Aorta (tissue), 5 donors: ENCODE measurements at regions of chr7 and their contacts with region 1.

Region 1: DNA sequence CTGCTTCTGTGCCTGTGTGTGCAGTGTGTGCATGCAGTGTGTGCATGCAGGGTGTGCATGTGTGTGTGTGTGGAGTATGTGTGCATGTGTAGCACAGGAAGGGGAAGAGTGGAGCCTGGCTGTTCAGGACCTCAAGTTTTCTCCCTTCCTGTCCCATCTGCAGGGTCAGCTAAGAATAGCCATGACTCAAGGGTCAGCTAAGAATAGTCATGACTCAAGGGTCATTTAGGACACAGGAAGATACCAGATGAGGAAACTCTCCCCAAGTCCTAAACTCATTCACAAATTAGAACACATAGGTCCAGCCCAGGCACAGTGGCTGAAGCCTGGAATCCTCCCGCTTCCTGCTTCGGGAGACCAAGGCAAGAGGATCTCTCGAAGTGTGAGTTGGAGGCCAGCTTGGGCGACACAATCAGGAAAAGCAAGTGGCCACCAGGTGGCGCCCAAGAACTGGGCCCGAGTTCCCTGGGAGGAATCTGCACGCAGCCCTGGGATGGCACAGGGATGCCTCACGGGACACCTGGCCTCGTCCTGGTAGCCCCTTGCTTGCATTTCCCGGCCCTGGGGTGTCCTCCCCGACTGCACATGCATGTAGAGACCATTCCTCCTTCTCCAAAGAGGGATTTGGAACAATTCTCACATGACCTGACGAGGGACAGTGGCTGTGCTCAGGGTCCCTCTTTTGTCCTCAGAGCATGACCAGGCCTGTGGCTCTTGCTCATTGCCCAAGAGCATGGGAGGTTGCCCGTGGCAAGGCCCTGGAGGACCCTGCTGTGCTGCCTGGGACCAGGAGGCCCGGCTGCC is 21.4 kb upstream of the VOPP1 start:
- DNase-seq: peak; percentile 78 to 90
- ATAC-seq: peak; percentile 49
- H3K4me3 ChIP-seq: no peak overlapping the region
- H3K27ac ChIP-seq: no peak overlapping the region
- H3K4me1 ChIP-seq: no peaks in the 10 kb centered on the region
- H3K27me3 ChIP-seq: no peaks in the 10 kb centered on the region

Region 2: GRCh38 chr7:55280031-55280454 is 313.7 kb before region 1 on chr7:
- intact Hi-C with region 1: loop called (anchors 10 kb)
- DNase-seq: peak in 1 of 2 donors; percentile 58
- ATAC-seq: peak; percentile 81
- H3K4me3 ChIP-seq: no peak overlapping the region
- H3K27ac ChIP-seq: no peak overlapping the region
- H3K4me1 ChIP-seq: no peaks in the 10 kb centered on the region
- H3K27me3 ChIP-seq: no peaks in the 10 kb centered on the region

Region 3: DNA sequence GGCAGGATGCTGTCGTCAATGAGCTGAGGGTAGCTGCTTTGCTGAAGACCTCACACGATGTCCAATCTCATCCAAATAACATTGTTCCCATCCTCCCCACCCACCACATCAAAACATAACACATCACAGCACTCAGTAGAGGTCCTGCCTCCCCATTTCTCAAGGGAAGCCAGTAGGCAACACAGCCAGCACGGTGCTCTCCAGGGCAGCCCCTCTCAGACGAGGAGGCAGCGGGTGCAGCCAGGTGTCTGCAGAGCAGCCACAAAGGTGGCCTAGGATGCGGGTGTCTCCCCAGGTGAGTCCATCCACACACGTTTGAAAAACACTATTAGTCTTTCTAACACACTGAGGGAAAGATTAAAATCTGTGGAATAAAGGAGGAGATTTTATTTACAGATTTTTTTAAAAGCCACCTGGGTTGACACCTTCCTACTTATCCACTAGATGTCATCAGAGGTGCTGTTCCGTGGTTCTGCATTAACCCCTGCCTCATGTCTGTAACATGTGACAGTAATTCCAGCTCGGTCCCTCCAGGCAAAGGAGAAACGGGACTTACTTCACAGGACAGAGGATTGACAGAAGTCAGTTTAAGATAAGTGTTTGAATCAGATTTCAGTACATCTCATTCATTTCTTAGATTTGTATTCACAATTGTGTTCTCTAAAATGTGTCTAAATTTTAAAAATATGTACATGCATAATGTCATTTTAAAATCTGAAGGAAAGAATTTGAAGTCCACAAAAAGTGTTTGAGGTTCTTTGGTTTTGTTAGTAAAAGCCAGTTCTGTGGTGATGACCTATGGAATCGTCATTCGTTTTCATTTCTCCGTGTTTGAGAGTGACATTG is 160.6 kb before region 1 on chr7:
- intact Hi-C with region 1: loop called in 1 of 2 experiments (anchors 5 kb)
- DNase-seq: no peak
- ATAC-seq: no peak
- H3K4me3 ChIP-seq: no peak overlapping the region
- H3K27ac ChIP-seq: no peak overlapping the region
- H3K4me1 ChIP-seq: no peaks in the 10 kb centered on the region
- H3K27me3 ChIP-seq: no peaks in the 10 kb centered on the region

Region 4: GRCh38 chr7:55439627-55440026 is 154.1 kb before region 1 on chr7:
- intact Hi-C with region 1: loop called (anchors 5 kb)
- DNase-seq: no peak
- ATAC-seq: no peak
- H3K4me3 ChIP-seq: no peak overlapping the region
- H3K27ac ChIP-seq: no peak overlapping the region
- H3K4me1 ChIP-seq: no peaks in the 10 kb centered on the region
- H3K27me3 ChIP-seq: no peaks in the 10 kb centered on the region

Region 5: GRCh38 chr7:55526770-55527169 is 66.9 kb before region 1 on chr7:
- intact Hi-C with region 1: loop called in 1 of 2 experiments (anchors 10 kb)
- DNase-seq: no peak
- ATAC-seq: no peak
- H3K4me3 ChIP-seq: no peak overlapping the region
- H3K27ac ChIP-seq: no peak overlapping the region
- H3K4me1 ChIP-seq: no peaks in the 10 kb centered on the region
- H3K27me3 ChIP-seq: no peaks in the 10 kb centered on the region

Region 6: GRCh38 chr7:55629051-55629677 is 35.4 kb after region 1 on chr7:
- intact Hi-C with region 1: no loop called
- DNase-seq: no peak
- ATAC-seq: no peak
- H3K4me3 ChIP-seq: no peak overlapping the region
- H3K27ac ChIP-seq: no peak overlapping the region
- H3K4me1 ChIP-seq: no peaks in the 10 kb centered on the region
- H3K27me3 ChIP-seq: no peaks in the 10 kb centered on the region